Cardiac septum (tissue), 1 donor: ENCODE measurements at regions of chr16 and their contacts with region 1.

Region 1: DNA sequence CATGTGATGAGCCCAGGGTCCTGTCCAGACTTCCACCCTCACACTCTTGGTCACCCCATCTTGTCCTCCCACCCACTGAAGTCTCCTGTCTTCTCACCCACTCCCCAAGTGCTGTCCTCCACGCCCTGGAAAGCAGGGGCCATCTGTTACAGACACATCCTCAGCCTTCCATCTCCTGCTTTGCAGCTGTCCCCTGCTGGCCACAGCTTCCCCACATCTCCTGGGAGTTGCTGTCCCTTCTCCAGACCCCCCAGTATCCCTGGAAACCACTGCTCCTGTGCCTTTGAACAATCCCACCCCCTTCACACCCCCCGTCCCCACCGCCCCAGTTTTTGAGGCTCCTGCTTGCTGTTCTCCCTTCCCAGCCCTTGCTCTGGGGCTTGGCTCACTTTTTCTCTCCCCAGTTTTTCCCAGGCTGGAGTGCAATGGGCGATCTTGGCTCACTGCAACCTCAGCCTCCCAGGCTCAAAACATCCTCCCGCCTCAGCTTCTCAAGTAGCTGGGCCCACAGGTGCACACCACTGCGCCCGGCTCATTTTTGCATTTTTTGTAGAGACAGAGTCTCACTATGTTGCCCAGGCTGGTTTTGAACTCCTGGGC is 30.4 kb upstream of the ZFP90 start:
- DNase-seq: no peak

Region 2: GRCh38 chr16:68396481-68396880 is 112.3 kb before region 1 on chr16:
- intact Hi-C with region 1: loop called (anchors 2 kb)
- DNase-seq: no peak